Esophagus muscularis mucosa (tissue), 4 donors: ENCODE measurements at regions of chr19 and their contacts with region 1.

Region 1: GRCh38 chr19:6632002-6632621 is 37.8 kb downstream of the TNFSF14 start:
- DNase-seq: no peak
- H3K4me3 ChIP-seq: no peak overlapping the region
- H3K27ac ChIP-seq: no peak overlapping the region
- H3K4me1 ChIP-seq: peaks cover 0 to 6% (median 1%) of the 10 kb centered on the region in 4 donors
- H3K27me3 ChIP-seq: peaks cover 0 to 24% (median 0%) of the 10 kb centered on the region in 4 donors
- CTCF ChIP-seq: peak; percentile 75 to 88 (median 86)
- EP300 ChIP-seq: no peak
- POLR2A ChIP-seq: no peak

Region 2: GRCh38 chr19:6602729-6603114 is 29.4 kb before region 1 on chr19:
- intact Hi-C with region 1: no loop called
- DNase-seq: no peak
- H3K4me3 ChIP-seq: no peak overlapping the region
- H3K27ac ChIP-seq: no peak overlapping the region
- H3K4me1 ChIP-seq: no peaks in the 10 kb centered on the region
- H3K27me3 ChIP-seq: peaks cover 0 to 21% (median 0%) of the 10 kb centered on the region in 4 donors
- CTCF ChIP-seq: no peak
- EP300 ChIP-seq: no peak
- POLR2A ChIP-seq: no peak

Region 3: GRCh38 chr19:6862673-6863078 is 230.6 kb after region 1 on chr19:
- intact Hi-C with region 1: loop called (anchors 1 kb)
- DNase-seq: peak; percentile 93
- H3K4me3 ChIP-seq: peak overlapping the region; percentile 31 to 49 (median 41)
- H3K27ac ChIP-seq: no peak overlapping the region
- H3K4me1 ChIP-seq: peaks cover 7 to 11% (median 9%) of the 10 kb centered on the region in 4 donors
- H3K27me3 ChIP-seq: peaks cover 0 to 31% (median 7%) of the 10 kb centered on the region in 4 donors
- CTCF ChIP-seq: peak; percentile 80 to 91 (median 86)
- EP300 ChIP-seq: no peak
- POLR2A ChIP-seq: no peak